Activated T-helper 1 cell treated with anti-CD3 and anti-CD28 coated beads, Interleukin-12 subunit alpha, Interleukin-12 subunit beta, Interleukin-2, Interleukin-4 antibody, amounts not matched to agents 30 ng/mL and 10 ng/mL and 1 ng/mL, durations not matched to agents 14 hours and 24 hours and 36 hours (primary cell): ENCODE measurements at regions of chr21 and their contacts with region 1.

Region 1: DNA sequence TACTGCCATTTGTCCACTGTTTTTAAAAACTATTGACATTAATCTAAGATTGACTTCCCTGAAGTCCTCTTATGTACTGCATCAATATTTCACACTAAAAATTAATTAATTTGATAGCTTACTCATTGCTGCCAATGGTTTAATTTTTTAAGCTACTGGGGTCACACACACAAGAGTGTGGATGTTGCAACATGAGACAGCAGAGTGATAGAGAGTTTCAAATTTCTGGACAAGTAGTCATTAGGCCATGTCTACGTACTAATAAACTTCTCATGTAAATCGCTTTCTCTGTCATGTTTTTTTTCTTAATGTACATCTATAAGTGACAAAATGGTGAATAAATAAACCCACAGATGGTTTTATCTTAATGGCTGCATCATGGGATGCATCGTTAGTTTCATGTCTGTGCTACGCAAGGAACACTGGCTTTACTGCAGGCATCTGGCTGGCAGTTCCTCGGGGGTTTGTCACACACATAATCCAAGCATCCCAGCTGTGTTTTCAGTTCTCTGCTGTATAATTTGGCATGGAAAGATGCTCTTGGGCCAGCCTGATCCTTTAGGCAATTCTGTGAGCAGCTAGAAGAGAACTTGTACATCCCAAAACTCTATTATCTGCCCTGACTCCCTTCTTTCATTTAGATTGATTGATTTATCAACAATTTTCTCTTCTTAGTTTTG is 16.4 kb upstream of the CHODL start:
- DNase-seq: no peak
- H3K4me3 Mint-ChIP-seq: no peak overlapping the region
- H3K27ac Mint-ChIP-seq: no peak overlapping the region
- H3K4me1 Mint-ChIP-seq: no peaks in the 10 kb centered on the region
- H3K27me3 Mint-ChIP-seq: no peaks in the 10 kb centered on the region

Region 2: DNA sequence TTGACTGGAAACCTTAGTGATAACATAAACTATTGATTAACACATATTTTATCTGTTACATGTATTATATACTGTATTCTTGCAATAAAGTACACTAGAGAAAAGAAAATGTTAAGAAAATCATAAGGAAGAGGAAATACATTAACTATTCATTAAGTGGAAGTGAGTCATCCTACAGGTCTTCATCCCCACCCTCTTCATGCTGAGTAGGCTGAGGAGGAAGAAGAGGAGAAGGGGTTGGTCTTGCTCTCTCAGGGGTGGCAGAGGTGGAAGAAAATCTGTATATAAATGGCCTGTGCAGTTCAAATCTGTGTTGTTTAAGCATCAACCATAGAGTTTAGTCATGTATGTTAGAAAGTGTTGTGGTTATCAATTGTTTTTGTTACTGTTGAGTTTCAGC is 49.7 kb before region 1 on chr21:
- intact Hi-C with region 1: loop called (anchors 5 kb)
- DNase-seq: no peak
- H3K4me3 Mint-ChIP-seq: no peak overlapping the region
- H3K27ac Mint-ChIP-seq: no peak overlapping the region
- H3K4me1 Mint-ChIP-seq: no peaks in the 10 kb centered on the region
- H3K27me3 Mint-ChIP-seq: no peaks in the 10 kb centered on the region

Region 3: DNA sequence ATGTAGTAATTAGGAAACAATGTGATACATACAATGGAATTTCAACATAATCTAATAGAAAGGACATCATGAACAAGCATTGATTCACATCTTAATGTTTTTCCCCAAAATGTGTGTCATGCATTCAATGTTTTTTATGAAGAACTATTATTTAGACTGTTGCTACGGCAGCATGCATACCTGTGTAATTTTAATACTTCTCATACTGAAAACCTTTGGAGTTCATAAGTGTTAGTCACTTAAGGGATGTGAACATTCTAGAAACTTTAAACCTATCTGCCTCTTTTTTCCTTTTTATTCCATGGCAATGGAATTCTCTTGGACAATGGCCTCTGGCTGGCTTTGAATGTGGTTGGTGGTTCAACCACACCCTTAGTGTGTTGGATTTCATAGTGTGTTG is 126.7 kb after region 1 on chr21:
- intact Hi-C with region 1: no loop called
- DNase-seq: no peak
- H3K4me3 Mint-ChIP-seq: no peak overlapping the region
- H3K27ac Mint-ChIP-seq: no peak overlapping the region
- H3K4me1 Mint-ChIP-seq: no peaks in the 10 kb centered on the region
- H3K27me3 Mint-ChIP-seq: no peaks in the 10 kb centered on the region